ENCODE measurements at regions of chr9 and their contacts with region 1.

Region 1: DNA sequence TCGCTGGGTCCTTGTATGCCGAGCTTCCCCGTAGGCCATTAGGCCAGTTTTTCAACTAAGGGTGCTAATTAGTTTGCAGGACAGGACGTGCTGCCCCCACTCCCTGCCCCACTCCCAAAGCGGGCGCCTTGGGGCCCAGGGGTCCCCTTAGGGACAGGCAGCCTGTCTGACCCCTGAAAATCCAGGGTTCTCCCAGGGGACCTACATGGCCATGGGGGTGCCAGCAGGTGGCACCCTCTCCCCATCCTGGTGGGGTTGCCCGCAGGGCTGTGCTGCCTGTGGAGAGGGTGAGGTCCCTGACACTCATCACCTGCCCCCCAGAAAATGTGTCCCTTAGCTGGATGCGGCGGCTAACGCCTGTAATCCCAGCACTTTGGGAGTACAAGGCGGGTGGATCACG is 8.5 kb upstream of the CCDC187 start:
- DNase-seq: no peak
- H3K4me3 ChIP-seq: no peak overlapping the region
- CTCF ChIP-seq: peak; percentile 84

Region 2: DNA sequence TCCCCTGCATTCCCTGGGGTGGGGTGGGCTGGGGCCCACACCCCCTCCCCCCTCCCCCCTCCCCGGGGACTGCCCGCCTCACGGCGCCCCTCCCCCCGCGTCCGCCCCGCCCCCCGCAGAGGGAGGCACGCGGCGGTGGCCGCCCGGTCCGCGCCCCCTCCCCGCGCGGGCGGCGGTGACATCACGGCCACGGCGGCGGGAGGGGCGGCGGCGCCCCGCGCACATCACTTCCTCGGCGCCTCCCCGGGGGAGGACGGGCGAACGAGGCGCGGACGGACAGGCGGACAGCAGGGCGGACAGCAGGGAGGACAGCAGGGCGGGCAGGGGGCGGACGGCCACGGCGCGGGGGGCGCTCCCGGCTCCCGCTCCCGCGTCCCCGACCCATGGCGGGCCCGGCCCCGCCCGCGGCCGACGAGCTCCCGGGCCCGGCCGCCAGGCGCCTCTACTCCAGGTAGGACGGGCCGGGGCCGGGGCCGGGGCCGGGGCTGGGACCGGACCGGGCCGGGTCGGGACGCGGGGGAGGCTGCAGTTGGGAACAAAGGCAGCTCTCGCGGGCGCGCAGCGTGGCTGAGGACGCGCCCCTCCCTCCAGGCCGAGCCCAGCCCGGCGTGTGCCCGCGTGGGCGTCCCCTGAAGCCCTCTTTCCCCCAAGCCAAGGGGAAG is 15.0 kb after region 1 on chr9 and contains the start of gene GPSM1:
- CTCF ChIA-PET with region 1: interaction called, 70 read pairs
- POLR2A ChIA-PET with region 1: no interaction called
- DNase-seq: no peak
- H3K4me3 ChIP-seq: peak within 1 kb of the TSS; percentile 79
- CTCF ChIP-seq: no peak

Region 3: DNA sequence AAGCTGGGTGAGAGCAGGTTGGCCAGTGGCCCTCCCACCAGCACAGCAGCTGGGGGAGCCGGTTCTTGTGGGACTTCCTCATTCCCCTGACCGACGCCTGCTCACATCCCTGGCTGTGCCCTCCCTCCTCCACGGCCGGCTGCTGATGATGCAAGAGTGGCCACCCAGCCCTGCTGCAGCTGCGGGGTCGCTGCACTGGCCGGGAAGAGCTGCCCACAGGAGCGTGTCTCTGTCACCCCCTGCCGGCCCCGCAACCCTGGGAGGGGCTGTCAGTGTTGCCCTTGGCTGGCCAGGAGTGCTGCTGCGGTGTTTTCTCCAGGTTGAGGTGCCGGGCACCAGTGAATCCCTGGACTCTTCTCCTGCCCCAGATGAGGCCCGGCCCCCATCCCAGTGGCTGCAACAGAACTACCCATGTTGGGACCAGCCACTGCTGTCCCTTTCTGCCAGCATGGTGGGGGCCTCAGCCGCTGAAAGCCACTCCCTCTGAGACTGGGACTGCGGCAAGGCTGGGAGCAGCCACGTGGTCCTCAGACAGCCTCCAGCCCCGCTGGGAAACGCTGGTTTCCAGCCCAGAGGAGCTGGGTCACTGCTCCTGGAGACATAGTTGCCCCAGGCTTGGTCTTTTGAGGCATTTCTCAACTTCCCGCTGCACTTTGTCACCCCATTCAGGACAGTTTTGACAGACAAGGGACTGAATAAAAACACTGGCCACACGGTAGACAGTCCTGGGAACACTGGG is 60.3 kb after region 1 on chr9:
- CTCF ChIA-PET with region 1: interaction called, 93 read pairs
- POLR2A ChIA-PET with region 1: no interaction called
- DNase-seq: peak; percentile 21
- H3K4me3 ChIP-seq: no peak overlapping the region
- CTCF ChIP-seq: peak; percentile 15

Region 4: GRCh38 chr9:136400038-136400834 is 87.8 kb after region 1 on chr9 and contains the start of gene SNAPC4:
- CTCF ChIA-PET with region 1: interaction called, 142 read pairs
- POLR2A ChIA-PET with region 1: no interaction called
- DNase-seq: no peak
- H3K4me3 ChIP-seq: peak within 1 kb of the TSS; percentile 83
- CTCF ChIP-seq: peak; percentile 80

Region 5: GRCh38 chr9:136439550-136440408 is 127.3 kb after region 1 on chr9 and contains the start of gene INPP5E:
- CTCF ChIA-PET with region 1: interaction called, 12 read pairs
- POLR2A ChIA-PET with region 1: no interaction called
- DNase-seq: no peak
- H3K4me3 ChIP-seq: peak within 1 kb of the TSS; percentile 72
- CTCF ChIP-seq: peak; percentile 74

Measured in AG04449 (cell line).